ENCODE measurements at regions of chr1 and their contacts with region 1.

Region 1: GRCh38 chr1:204706838-204707509 is 21.4 kb upstream of the LRRN2 start:
- DNase-seq: peak in 1 of 2 experiments; percentile 69
- H3K4me3 ChIP-seq: peak overlapping the region in 1 of 4 experiments; percentile 10; a peak in 3 of 8 replicates
- H3K27ac ChIP-seq: no peak overlapping the region
- H3K4me1 ChIP-seq: peaks cover 31 to 43% (median 32%) of the 10 kb centered on the region in 4 experiments
- H3K27me3 ChIP-seq: peaks cover 22 to 55% (median 47%) of the 10 kb centered on the region in 4 experiments
- CTCF ChIP-seq: no peak
- EP300 ChIP-seq: 0 out of 3 replicates have a peak, but pooled peaks of 1 of the 2 experiments have one; percentile 5
- POLR2A ChIP-seq: no peak
- RAD21 ChIP-seq: no peak

Region 2: GRCh38 chr1:204692325-204692840 is 14.6 kb before region 1 on chr1:
- CTCF ChIA-PET with region 1: interaction called, 53 read pairs
- POLR2A ChIA-PET with region 1: interaction called, 3 read pairs
- DNase-seq: peak in 1 of 2 experiments; percentile 53
- H3K4me3 ChIP-seq: peak overlapping the region in 1 of 4 experiments; percentile 12; a peak in 1 of 8 replicates
- H3K27ac ChIP-seq: no peak overlapping the region
- H3K4me1 ChIP-seq: peaks cover 1 to 4% (median 2%) of the 10 kb centered on the region in 4 experiments; a peak in 5 of 7 replicates
- H3K27me3 ChIP-seq: peaks cover 0 to 5% (median 5%) of the 10 kb centered on the region in 4 experiments; a peak in 3 of 7 replicates
- CTCF ChIP-seq: peak; percentile 5 to 30 (median 23)
- EP300 ChIP-seq: no peak
- POLR2A ChIP-seq: no peak
- RAD21 ChIP-seq: peak; percentile 41 to 54; a peak in 3 of 4 replicates

Region 3: DNA sequence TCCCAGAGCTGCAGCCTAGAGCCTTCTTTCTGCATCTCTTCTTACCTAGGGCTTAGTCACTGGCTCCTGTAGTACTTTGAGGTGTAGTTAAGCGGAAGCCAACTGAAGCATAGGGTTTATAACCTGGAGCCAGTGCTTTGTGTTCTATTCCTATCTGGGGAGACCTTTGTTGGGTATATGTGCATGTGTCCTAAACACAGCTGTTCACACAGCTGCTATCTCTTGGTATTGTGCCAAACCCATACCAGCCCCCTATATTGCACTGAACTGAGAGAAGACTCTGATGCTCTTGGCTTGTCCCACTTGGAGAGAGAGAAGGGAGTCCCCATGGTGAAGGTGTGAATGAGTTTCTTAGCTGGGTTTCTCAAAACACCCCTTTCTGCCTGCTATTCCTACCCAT is 146.5 kb after region 1 on chr1:
- CTCF ChIA-PET with region 1: no interaction called
- POLR2A ChIA-PET with region 1: no interaction called
- DNase-seq: no peak
- H3K4me3 ChIP-seq: no peak overlapping the region
- H3K27ac ChIP-seq: no peak overlapping the region
- H3K4me1 ChIP-seq: peaks cover 0 to 3% (median under 1%) of the 10 kb centered on the region in 4 experiments; a peak in 3 of 7 replicates
- H3K27me3 ChIP-seq: no peaks in the 10 kb centered on the region
- CTCF ChIP-seq: no peak
- EP300 ChIP-seq: no peak
- POLR2A ChIP-seq: no peak
- RAD21 ChIP-seq: no peak